OCI-LY7 (cell line): ENCODE measurements at regions of chr1 and their contacts with region 1.

Region 1: DNA sequence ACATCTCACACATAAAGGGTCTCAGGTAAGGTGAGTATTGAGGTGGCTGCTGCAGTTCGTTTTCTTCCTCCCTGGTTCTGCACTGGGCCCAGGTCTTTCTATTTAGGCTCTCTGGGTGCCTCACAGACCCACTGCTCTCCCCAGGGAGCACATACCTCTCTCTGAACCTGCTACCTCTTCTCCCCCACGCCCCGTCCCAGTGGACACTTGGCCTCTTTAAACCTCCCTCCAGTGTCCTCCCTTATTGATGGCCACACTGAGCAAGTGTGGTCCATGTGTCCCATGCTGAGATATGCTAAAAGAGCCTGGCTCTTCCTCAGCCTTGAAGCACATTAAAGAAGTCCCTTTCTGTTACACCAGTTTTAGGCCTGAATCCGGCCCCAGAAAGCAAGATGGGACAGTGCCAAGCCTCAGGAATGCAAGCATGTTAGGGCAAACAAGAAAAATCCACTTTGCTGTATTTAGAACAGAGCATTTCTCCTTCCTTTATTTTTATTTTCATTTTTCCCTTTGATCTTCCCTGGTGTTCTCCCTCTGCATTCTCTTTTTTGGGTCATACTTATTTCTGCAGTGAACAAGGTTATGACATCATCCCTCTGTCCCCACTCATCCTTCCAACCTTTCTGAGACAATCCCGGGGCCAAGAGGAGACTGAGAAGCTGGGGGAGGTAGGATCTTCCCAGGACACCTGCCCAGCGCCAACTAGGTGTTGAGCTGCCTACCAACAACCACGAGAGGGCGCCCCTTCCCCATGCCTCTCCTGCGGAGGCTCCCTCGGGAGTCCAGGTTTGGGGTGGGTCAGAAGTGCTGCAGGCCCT is 5.0 kb upstream of the CHI3L2 start:
- DNase-seq: peak; percentile 89
- H3K4me3 ChIP-seq: peak overlapping the region; percentile 53
- H3K27ac ChIP-seq: peak overlapping the region; percentile 97
- H3K4me1 ChIP-seq: peaks cover 84% of the 10 kb centered on the region
- CTCF ChIP-seq: peak; percentile 99

Region 2: GRCh38 chr1:110630839-110631663 is 591.5 kb before region 1 on chr1:
- CTCF ChIA-PET with region 1: no interaction called
- POLR2A ChIA-PET with region 1: no interaction called
- intact Hi-C with region 1: loop called (anchors 5 kb)
- DNase-seq: peak; percentile 91
- H3K4me3 ChIP-seq: peak overlapping the region; percentile 32
- H3K27ac ChIP-seq: peak overlapping the region; percentile 86
- H3K4me1 ChIP-seq: peaks cover 79% of the 10 kb centered on the region
- CTCF ChIP-seq: peak; percentile 92

Region 3: GRCh38 chr1:111127923-111128643 is 94.4 kb before region 1 on chr1:
- CTCF ChIA-PET with region 1: interaction called, 5 read pairs
- POLR2A ChIA-PET with region 1: interaction called, 34 read pairs
- intact Hi-C with region 1: no loop called
- DNase-seq: peak; percentile 91
- H3K4me3 ChIP-seq: peak overlapping the region; percentile 65
- H3K27ac ChIP-seq: peak overlapping the region; percentile 98
- H3K4me1 ChIP-seq: peaks cover 95% of the 10 kb centered on the region
- CTCF ChIP-seq: no peak

Region 4: GRCh38 chr1:111197598-111198284 is 24.8 kb before region 1 on chr1:
- CTCF ChIA-PET with region 1: interaction called, 3 read pairs
- POLR2A ChIA-PET with region 1: interaction called, 19 read pairs
- intact Hi-C with region 1: no loop called
- DNase-seq: peak; percentile 57
- H3K4me3 ChIP-seq: no peak overlapping the region
- H3K27ac ChIP-seq: no peak overlapping the region
- H3K4me1 ChIP-seq: peaks cover 59% of the 10 kb centered on the region
- CTCF ChIP-seq: peak; percentile 63

Region 5: DNA sequence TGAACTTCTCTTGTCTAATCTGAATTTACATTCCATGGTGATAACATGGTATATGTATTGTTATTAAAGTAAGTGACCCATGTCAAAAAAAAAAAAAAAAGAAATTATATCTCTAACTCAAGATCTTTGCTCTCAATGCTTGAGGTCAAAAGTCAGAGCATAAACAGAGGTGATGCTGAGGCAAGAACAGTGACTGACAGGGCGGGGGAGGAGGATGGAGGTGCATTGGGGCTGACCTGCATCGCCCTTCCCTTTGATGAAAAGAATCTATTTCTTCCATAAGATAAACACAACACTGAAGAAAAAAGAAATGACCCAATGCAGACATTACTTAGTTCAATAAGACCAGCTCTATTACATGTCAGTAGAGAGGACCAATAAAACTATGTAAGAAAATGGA is 158.9 kb after region 1 on chr1:
- CTCF ChIA-PET with region 1: no interaction called
- POLR2A ChIA-PET with region 1: no interaction called
- intact Hi-C with region 1: no loop called
- DNase-seq: no peak
- H3K4me3 ChIP-seq: no peak overlapping the region
- H3K27ac ChIP-seq: no peak overlapping the region
- H3K4me1 ChIP-seq: no peaks in the 10 kb centered on the region
- CTCF ChIP-seq: no peak

Region 6: DNA sequence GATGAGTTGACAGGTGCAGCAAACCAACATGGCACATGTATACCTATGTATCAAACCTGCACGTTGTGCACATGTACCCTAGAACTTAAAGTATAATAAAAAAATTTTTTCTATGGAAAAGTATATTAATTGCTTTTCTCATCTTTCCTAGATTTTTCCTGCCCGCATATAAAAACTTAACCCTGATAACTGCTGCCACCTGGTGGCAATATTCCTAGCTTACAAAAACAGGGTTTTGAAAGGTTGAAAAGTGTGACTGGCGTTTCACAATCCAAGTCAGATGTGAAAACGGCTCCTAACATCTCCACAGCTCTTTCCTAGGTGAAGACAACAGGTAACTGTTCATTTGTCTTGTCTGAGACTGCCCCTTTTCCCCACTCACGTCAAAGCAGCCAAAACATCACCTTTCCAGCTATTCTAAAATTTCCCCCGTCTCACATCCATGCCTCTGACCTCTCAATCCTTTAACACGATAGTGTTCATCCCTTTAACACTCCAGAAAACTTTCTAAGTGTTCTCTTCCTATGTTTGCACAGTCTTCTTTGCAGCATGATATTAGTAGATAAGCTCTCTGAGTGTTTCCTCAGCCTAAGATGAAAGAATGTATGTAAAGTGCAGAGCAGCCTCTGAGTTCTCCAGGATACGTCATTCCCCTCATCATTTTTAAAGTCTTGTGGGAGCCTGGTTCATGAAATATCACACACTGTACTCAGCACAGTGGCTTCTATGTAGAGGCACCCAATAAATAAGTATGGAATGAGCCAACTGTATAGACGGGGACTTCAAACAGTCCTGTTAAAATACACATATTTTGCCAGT is 177.5 kb after region 1 on chr1:
- CTCF ChIA-PET with region 1: interaction called, 3 read pairs
- POLR2A ChIA-PET with region 1: interaction called, 25 read pairs
- intact Hi-C with region 1: loop called (anchors 1 kb)
- DNase-seq: peak; percentile 67
- H3K4me3 ChIP-seq: no peak overlapping the region
- H3K27ac ChIP-seq: no peak overlapping the region
- H3K4me1 ChIP-seq: peaks cover 25% of the 10 kb centered on the region
- CTCF ChIP-seq: peak; percentile 86

Region 7: GRCh38 chr1:111603979-111604378 is 381.5 kb after region 1 on chr1:
- CTCF ChIA-PET with region 1: no interaction called
- POLR2A ChIA-PET with region 1: no interaction called
- intact Hi-C with region 1: loop called (anchors 5 kb)
- DNase-seq: peak; percentile 77
- H3K4me3 ChIP-seq: no peak overlapping the region
- H3K27ac ChIP-seq: peak overlapping the region; percentile 75
- H3K4me1 ChIP-seq: peaks cover 64% of the 10 kb centered on the region
- CTCF ChIP-seq: no peak